Ovary (tissue), 10 donors: ENCODE measurements at regions of chr11 and their contacts with region 1.

Region 1: GRCh38 chr11:27874998-27875830 is 175.0 kb upstream of the BDNF start:
- DNase-seq: no peak
- H3K4me3 ChIP-seq: no peak overlapping the region
- H3K27ac ChIP-seq: no peak overlapping the region
- H3K4me1 ChIP-seq: no peaks in the 10 kb centered on the region
- H3K27me3 ChIP-seq: no peaks in the 10 kb centered on the region
- CTCF ChIP-seq: no peak
- EP300 ChIP-seq: no peak
- POLR2A ChIP-seq: no peak

Region 2: GRCh38 chr11:26806219-26806618 is 1069.0 kb before region 1 on chr11:
- intact Hi-C with region 1: no loop called
- DNase-seq: no peak
- H3K4me3 ChIP-seq: no peak overlapping the region
- H3K27ac ChIP-seq: no peak overlapping the region
- H3K4me1 ChIP-seq: no peaks in the 10 kb centered on the region
- H3K27me3 ChIP-seq: no peaks in the 10 kb centered on the region
- CTCF ChIP-seq: no peak
- EP300 ChIP-seq: no peak
- POLR2A ChIP-seq: no peak

Region 3: GRCh38 chr11:27954614-27955013 is 79.4 kb after region 1 on chr11:
- intact Hi-C with region 1: no loop called
- DNase-seq: no peak
- H3K4me3 ChIP-seq: no peak overlapping the region
- H3K27ac ChIP-seq: no peak overlapping the region
- H3K4me1 ChIP-seq: no peaks in the 10 kb centered on the region
- H3K27me3 ChIP-seq: no peaks in the 10 kb centered on the region
- CTCF ChIP-seq: no peak
- EP300 ChIP-seq: no peak
- POLR2A ChIP-seq: no peak

Region 4: GRCh38 chr11:29553990-29554389 is 1678.8 kb after region 1 on chr11:
- intact Hi-C with region 1: loop called in 1 of 4 experiments (anchors 5 kb)
- DNase-seq: no peak
- H3K4me3 ChIP-seq: no peak overlapping the region
- H3K27ac ChIP-seq: no peak overlapping the region
- H3K4me1 ChIP-seq: no peaks in the 10 kb centered on the region
- H3K27me3 ChIP-seq: no peaks in the 10 kb centered on the region
- CTCF ChIP-seq: no peak
- EP300 ChIP-seq: no peak
- POLR2A ChIP-seq: no peak